CD4-positive, alpha-beta T cell (primary cell): ENCODE measurements at regions of chrX and their contacts with region 1.

Region 1: DNA sequence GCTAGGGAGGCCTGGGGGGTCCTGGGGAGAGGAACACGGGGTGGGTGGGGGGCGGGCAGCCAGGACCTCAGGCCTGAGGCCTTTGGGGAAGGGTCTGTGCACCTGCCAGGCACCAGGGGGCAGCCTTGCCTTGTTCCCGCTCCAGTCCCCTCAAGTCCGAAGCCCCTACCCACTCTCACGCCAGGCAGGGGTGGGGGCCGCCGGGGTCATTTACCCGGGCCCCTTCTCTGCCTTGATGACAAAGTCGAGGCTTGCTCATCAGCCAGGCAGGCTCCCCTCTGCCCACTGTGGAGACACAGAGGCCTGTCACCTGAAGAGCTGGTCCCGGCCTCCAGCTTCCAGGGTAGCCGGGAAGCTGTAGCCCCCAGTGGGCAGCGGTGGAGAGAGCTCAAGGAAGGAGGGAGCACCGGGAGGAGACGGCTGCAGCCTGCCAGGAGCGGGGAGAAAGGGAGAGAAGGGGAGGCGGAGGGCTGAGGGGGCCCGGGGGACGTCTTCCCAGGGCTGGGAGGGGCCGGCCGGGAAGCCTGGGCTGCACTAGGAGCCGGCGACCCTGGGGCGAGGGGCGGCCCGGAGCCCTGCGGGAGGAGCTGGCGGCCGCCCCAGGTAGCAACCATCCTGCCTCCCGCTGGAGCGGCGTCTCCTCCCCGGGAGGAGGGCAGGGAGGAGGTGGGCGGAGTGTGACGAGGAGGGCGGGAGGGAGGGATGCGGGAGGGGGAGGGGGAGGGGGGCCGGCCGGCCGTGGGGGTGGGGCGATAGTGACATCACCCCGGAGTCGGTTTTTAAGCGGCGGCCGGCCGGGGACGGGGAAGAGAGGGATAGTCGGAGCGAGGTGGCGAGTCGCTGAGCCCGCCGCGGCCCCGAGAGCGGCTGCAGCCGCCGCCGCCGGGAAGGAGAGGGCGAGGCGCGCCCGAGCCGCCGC is at the start of gene SLC6A8:
- DNase-seq: peak in 10 of 14 experiments; percentile 3 to 71 (median 31)
- ATAC-seq: peak; percentile 42
- H3K4me3 ChIP-seq: peak within 1 kb of the TSS; percentile 36
- H3K4me3 Mint-ChIP-seq: peak within 1 kb of the TSS; percentile 84
- H3K27ac ChIP-seq: no peak within 1 kb of the TSS
- H3K27ac Mint-ChIP-seq: no peak within 1 kb of the TSS
- H3K4me1 ChIP-seq: peaks cover 6% of the 10 kb centered on the region
- H3K4me1 Mint-ChIP-seq: no peaks in the 10 kb centered on the region
- H3K27me3 ChIP-seq: peaks cover 0 to 3% of the 10 kb centered on the region in 2 experiments
- H3K27me3 Mint-ChIP-seq: peaks cover 7% of the 10 kb centered on the region
- CTCF ChIP-seq: peak; percentile 7
- total RNA-seq, gene SLC6A8: 0.42 to 0.71 TPM

Region 2: GRCh38 chrX:152997337-152997736 is 690.0 kb before region 1 on chrX:
- CTCF ChIA-PET with region 1: no interaction called
- POLR2A ChIA-PET with region 1: no interaction called
- intact Hi-C with region 1: no loop called
- DNase-seq: no peak
- ATAC-seq: no peak
- H3K4me3 ChIP-seq: no peak overlapping the region
- H3K4me3 Mint-ChIP-seq: no peak overlapping the region
- H3K27ac ChIP-seq: no peak overlapping the region
- H3K27ac Mint-ChIP-seq: no peak overlapping the region
- H3K4me1 ChIP-seq: no peaks in the 10 kb centered on the region
- H3K4me1 Mint-ChIP-seq: no peaks in the 10 kb centered on the region
- H3K27me3 ChIP-seq: no peaks in the 10 kb centered on the region
- H3K27me3 Mint-ChIP-seq: no peaks in the 10 kb centered on the region
- CTCF ChIP-seq: no peak

Region 3: GRCh38 chrX:153708415-153708814 is 21.0 kb after region 1 on chrX:
- CTCF ChIA-PET with region 1: no interaction called
- POLR2A ChIA-PET with region 1: no interaction called
- intact Hi-C with region 1: no loop called
- DNase-seq: peak in 10 of 14 experiments; percentile 21 to 67 (median 38)
- ATAC-seq: peak; percentile 74
- H3K4me3 ChIP-seq: no peak overlapping the region
- H3K4me3 Mint-ChIP-seq: no peak overlapping the region
- H3K27ac ChIP-seq: no peak overlapping the region
- H3K27ac Mint-ChIP-seq: no peak overlapping the region
- H3K4me1 ChIP-seq: peaks cover 5% of the 10 kb centered on the region
- H3K4me1 Mint-ChIP-seq: peaks cover 13% of the 10 kb centered on the region
- H3K27me3 ChIP-seq: no peaks in the 10 kb centered on the region
- H3K27me3 Mint-ChIP-seq: no peaks in the 10 kb centered on the region
- CTCF ChIP-seq: no peak

Region 4: DNA sequence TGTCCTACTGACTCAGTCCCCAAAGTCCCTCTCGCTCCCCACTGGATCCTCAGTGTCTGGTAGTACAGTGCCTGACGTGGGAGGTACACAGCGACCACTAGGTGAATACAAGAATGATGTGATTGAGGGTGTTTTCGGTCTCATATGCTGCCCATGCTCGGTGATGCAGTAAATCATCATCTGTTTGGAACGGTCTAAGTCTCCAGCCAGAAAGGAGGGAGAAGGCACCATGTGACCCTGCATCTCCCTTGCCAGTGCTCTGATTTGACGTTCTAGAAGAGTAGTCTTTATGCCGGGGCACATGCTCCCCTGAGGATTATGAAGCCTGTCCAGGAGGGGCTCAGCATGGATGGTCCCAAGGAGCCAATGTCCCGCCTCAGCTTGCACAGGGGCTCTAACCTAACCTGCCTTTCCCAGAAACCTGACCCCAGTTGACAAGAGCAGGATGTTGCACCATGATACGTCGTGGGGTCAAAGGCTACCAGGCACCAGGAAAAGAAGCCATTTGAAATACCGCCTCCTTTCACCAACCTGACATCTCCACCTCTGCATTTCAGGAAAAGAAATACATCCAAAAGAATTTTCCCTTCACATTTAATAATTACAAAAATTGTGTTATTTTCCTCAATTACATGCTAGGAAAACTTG is 62.9 kb after region 1 on chrX:
- CTCF ChIA-PET with region 1: no interaction called
- POLR2A ChIA-PET with region 1: no interaction called
- intact Hi-C with region 1: loop called in 1 of 2 experiments (anchors 10 kb)
- DNase-seq: no peak
- ATAC-seq: no peak
- H3K4me3 ChIP-seq: no peak overlapping the region
- H3K4me3 Mint-ChIP-seq: no peak overlapping the region
- H3K27ac ChIP-seq: no peak overlapping the region
- H3K27ac Mint-ChIP-seq: no peak overlapping the region
- H3K4me1 ChIP-seq: no peaks in the 10 kb centered on the region
- H3K4me1 Mint-ChIP-seq: no peaks in the 10 kb centered on the region
- H3K27me3 ChIP-seq: no peaks in the 10 kb centered on the region
- H3K27me3 Mint-ChIP-seq: no peaks in the 10 kb centered on the region
- CTCF ChIP-seq: no peak

Region 5: DNA sequence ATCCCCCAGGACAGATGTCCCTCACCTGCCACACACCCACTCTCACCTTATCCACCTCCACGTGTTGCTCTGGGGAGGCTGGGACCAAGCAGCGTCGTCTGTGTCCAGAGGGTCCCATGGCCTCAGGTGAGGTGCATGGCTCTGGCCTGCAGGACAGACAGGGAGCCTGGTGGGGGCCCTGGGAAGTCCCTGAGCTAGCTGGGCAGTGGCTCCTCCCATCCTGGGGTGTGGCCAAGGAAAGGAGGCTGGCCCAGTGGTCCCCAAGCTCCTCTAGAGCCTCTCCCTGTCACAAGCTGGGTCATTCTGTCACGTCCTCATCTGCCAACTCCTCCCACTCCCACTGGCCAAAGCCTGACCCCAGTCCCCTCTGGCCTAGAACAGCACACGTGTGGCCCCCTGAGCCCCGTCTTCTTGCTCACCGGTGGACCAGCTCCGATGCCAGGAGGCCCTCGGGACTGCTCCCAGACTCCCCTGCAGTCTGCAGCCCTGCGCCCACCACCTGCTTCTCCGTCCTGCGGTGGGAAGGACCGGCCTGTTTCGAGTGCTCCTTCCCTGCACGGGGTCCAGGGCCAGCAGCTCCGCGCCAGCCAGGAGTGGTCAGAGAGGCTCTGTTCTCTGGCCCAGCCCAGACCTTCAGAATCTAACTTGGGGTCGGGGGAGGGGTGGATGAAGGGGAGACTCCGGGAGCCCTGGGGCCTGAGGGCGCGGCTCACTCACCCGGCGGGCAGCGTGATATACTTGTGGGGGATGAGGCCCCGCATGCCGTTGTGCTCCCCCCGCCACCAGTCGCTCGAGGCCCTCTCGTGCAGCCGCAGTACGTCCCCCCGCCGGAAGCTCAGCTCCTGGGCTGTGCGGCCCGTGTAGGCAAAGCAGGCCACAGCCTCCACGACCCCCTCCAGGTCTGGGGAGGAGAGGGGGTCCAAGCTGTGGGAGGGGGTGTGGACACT is 221.9 kb after region 1 on chrX:
- CTCF ChIA-PET with region 1: no interaction called
- POLR2A ChIA-PET with region 1: no interaction called
- intact Hi-C with region 1: no loop called
- DNase-seq: peak in 1 of 14 experiments; percentile 7
- ATAC-seq: no peak
- H3K4me3 ChIP-seq: no peak overlapping the region
- H3K4me3 Mint-ChIP-seq: no peak overlapping the region
- H3K27ac ChIP-seq: no peak overlapping the region
- H3K27ac Mint-ChIP-seq: no peak overlapping the region
- H3K4me1 ChIP-seq: peaks cover 33% of the 10 kb centered on the region
- H3K4me1 Mint-ChIP-seq: peaks cover 23% of the 10 kb centered on the region
- H3K27me3 ChIP-seq: no peaks in the 10 kb centered on the region
- H3K27me3 Mint-ChIP-seq: no peaks in the 10 kb centered on the region
- CTCF ChIP-seq: no peak

Region 6: GRCh38 chrX:153927922-153928760 is 240.8 kb after region 1 on chrX:
- CTCF ChIA-PET with region 1: no interaction called
- POLR2A ChIA-PET with region 1: no interaction called
- intact Hi-C with region 1: no loop called
- DNase-seq: peak; percentile 79 to 98 (median 92)
- ATAC-seq: peak; percentile 72
- H3K4me3 ChIP-seq: peak overlapping the region; percentile 83
- H3K4me3 Mint-ChIP-seq: peak overlapping the region; percentile 96
- H3K27ac ChIP-seq: peak overlapping the region; percentile 93 to 97
- H3K27ac Mint-ChIP-seq: peak overlapping the region; percentile 99
- H3K4me1 ChIP-seq: peaks cover 51% of the 10 kb centered on the region
- H3K4me1 Mint-ChIP-seq: peaks cover 39% of the 10 kb centered on the region
- H3K27me3 ChIP-seq: no peaks in the 10 kb centered on the region
- H3K27me3 Mint-ChIP-seq: no peaks in the 10 kb centered on the region
- CTCF ChIP-seq: no peak

Region 7: DNA sequence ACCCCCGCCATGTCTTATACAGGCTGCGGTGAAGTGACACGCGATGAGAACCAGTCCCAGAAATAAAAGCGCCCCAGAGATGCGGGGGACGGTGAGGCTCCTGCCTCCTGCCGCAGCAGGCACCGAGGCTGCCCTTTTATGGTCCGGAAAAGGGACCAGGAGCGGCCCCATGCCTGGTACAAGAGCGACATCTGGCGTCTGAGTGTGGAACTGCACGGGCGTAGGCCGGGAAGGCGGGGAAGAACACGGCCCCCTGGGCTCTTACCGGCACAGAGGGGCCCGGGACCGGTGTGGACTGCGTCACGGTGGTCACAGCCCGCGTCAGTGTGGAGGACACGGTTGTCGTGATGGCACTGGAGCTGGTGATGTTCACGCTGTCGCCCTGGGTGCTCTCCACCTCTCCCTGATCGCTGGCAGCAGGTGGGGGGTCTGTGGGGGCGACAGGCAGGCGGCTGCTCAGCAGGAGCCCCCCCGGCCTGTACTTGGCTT is 266.0 kb after region 1 on chrX:
- CTCF ChIA-PET with region 1: no interaction called
- POLR2A ChIA-PET with region 1: no interaction called
- intact Hi-C with region 1: loop called in 1 of 2 experiments (anchors 5 kb)
- DNase-seq: peak; percentile 62 to 84 (median 76)
- ATAC-seq: peak; percentile 81
- H3K4me3 ChIP-seq: no peak overlapping the region
- H3K4me3 Mint-ChIP-seq: peak overlapping the region; percentile 25
- H3K27ac ChIP-seq: no peak overlapping the region
- H3K27ac Mint-ChIP-seq: no peak overlapping the region
- H3K4me1 ChIP-seq: peaks cover 18% of the 10 kb centered on the region
- H3K4me1 Mint-ChIP-seq: peaks cover 9% of the 10 kb centered on the region
- H3K27me3 ChIP-seq: no peaks in the 10 kb centered on the region
- H3K27me3 Mint-ChIP-seq: no peaks in the 10 kb centered on the region
- CTCF ChIP-seq: peak; percentile 79